IMR-90 (cell line): ENCODE measurements at regions of chr7 and their contacts with region 1.

Region 1: DNA sequence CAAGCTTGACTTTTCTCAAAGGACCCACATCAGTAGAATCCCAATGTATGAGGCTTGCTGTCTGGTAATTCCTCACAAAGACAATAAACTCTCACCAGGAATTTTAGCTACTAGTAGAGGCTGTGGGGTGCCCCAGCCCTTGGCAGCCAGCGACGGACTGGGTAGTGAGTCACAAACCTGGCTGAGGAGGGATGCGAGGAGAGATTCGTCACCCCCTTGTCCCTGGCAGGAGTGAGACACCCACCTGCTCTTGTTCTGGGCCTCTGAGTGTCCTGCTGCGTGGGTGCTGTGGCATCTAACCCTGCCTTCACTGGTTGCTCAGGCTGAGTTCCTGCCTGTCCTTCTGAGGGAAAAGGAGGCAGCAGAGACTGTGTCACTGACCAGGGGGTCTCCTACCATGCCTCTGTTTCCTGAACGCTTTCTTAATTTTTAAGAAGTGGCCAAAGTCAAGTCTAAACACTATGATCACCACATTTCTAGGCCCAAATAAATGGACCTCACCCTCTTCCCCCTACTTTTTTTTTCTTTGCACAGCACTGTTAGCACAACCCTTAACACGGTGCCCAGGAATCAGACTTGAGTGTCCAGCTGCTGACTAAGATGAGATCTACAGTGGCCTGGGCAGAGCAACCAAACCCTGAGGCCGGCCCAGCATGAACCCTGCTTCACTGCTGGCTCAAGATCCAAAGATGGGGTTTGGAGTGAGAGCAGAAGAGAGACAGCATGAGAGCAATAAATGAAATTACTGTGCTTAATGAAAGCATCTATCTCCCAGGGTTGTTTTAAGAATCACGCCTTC is 146.4 kb downstream of the ANLN start:
- DNase-seq: no peak
- ATAC-seq: no peak
- H3K4me3 ChIP-seq: no peak overlapping the region
- H3K27ac ChIP-seq: no peak overlapping the region
- H3K4me1 ChIP-seq: no peaks in the 10 kb centered on the region
- H3K27me3 ChIP-seq: peaks cover 4% of the 10 kb centered on the region; the same call in 1 of the 2 replicates
- CTCF ChIP-seq: no peak
- POLR2A ChIP-seq: no peak
- RAD21 ChIP-seq: no peak

Region 2: GRCh38 chr7:36633377-36633776 is 97.3 kb after region 1 on chr7:
- CTCF ChIA-PET with region 1: no interaction called
- POLR2A ChIA-PET with region 1: interaction called, 12 read pairs
- dilution Hi-C with region 1: no loop called
- in situ Hi-C with region 1: no loop called
- intact Hi-C with region 1: no loop called
- DNase-seq: no peak
- ATAC-seq: no peak
- H3K4me3 ChIP-seq: no peak overlapping the region
- H3K27ac ChIP-seq: no peak overlapping the region
- H3K4me1 ChIP-seq: no peaks in the 10 kb centered on the region
- H3K27me3 ChIP-seq: peaks cover 31% of the 10 kb centered on the region
- CTCF ChIP-seq: no peak
- POLR2A ChIP-seq: no peak
- RAD21 ChIP-seq: no peak